Ovary (tissue), 10 donors: ENCODE measurements at regions of chr6 and their contacts with region 1.

Region 1: DNA sequence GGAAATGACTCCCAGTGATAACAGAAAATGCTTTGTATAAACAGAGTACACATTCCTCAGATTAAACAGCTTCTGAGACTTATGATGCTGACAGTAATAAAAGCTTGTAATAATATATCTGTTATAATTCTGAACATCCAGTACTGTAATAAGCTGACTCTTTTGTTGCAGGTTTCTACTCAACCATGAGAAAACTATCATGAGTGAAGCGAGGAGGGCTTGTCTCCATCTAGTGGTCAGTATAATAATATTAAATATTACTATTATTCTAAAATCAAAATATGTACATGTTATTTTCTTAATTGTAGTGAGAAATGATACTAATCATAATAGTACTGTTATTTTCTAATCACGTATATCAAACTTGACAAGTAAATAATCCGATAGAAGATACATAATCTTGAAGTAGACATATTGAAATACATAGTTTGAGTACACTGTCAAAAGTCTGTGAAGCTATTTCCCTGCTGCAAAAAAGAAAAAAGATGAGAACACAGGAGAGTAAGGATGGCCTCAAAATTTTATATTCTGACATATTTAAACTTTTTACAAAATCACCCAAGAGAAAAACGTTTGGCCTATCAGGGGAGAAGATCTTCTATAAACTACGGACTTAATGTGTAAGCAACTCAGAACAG is 183.1 kb downstream of the MOXD1 start:
- DNase-seq: no peak
- H3K4me3 ChIP-seq: no peak overlapping the region
- H3K27ac ChIP-seq: no peak overlapping the region
- H3K4me1 ChIP-seq: no peaks in the 10 kb centered on the region
- H3K27me3 ChIP-seq: no peaks in the 10 kb centered on the region
- CTCF ChIP-seq: peak; percentile 29 to 51 (median 48)
- EP300 ChIP-seq: no peak
- POLR2A ChIP-seq: no peak

Region 2: DNA sequence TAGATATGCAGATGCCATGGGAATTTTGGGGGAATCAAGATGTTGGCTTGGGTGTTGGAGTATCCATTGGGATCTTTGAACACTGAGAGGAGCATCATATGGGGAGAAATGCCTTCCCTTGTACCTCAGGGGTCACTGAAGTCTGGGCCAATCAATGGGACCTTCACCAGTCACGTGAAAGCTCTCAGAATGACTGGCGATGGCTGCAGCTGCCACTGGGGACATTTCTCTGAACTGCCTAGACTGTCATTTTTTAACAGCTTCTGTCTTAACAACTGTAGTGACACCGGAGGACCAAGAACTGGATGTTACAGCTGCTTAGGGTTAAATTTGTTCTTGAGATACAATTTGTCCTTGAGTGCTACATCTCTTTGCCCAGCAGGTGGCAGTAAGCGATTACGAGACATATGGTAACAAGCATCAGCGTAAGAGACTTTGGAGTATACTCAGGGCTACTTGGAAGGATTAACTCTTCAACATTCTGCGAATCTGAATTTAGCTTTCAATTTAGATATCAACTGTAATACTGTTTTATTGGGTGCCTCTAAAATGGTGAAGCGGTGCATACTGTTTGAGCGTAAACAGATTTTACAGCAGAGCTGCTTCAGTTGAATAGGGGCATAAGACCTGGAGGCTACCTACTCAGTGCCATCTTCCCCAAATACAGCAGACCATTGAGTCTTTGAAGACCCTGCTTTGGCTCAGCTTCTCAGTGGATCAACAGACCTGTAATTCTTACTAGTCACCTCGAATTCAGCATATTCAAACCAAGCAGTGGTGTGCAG is 303.0 kb before region 1 on chr6:
- intact Hi-C with region 1: loop called in 1 of 4 experiments (anchors 5 kb)
- DNase-seq: peak; percentile 40 to 71 (median 49)
- H3K4me3 ChIP-seq: no peak overlapping the region
- H3K27ac ChIP-seq: no peak overlapping the region
- H3K4me1 ChIP-seq: no peaks in the 10 kb centered on the region
- H3K27me3 ChIP-seq: no peaks in the 10 kb centered on the region
- CTCF ChIP-seq: peak; percentile 49 to 72 (median 58)
- EP300 ChIP-seq: no peak
- POLR2A ChIP-seq: no peak

Region 3: GRCh38 chr6:131924881-131925474 is 293.2 kb before region 1 on chr6:
- intact Hi-C with region 1: loop called in 2 of 4 experiments (anchors 5 kb)
- DNase-seq: no peak
- H3K4me3 ChIP-seq: no peak overlapping the region
- H3K27ac ChIP-seq: no peak overlapping the region
- H3K4me1 ChIP-seq: no peaks in the 10 kb centered on the region
- H3K27me3 ChIP-seq: no peaks in the 10 kb centered on the region
- CTCF ChIP-seq: peak; percentile 11 to 43 (median 22)
- EP300 ChIP-seq: no peak
- POLR2A ChIP-seq: no peak

Region 4: DNA sequence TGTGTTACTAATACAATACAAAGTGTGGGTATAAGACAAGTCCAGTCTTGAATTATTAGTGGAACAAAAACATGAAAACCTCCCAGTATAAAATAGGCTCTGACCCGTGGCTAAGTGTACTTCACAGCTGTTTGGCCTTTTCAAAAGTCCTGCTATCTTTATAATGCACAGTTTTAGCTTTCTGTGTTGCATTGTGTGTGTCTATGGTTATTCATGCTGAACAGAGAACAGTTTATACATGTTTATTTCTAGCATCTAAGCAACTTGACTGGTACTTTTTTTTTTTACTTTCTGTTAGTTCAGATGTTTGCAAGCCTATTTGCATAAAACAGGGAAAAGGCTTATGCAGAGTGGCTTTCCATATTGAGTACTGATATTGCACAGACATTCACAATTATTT is 147.8 kb before region 1 on chr6:
- intact Hi-C with region 1: no loop called
- DNase-seq: no peak
- H3K4me3 ChIP-seq: no peak overlapping the region
- H3K27ac ChIP-seq: no peak overlapping the region
- H3K4me1 ChIP-seq: no peaks in the 10 kb centered on the region
- H3K27me3 ChIP-seq: no peaks in the 10 kb centered on the region
- CTCF ChIP-seq: no peak
- EP300 ChIP-seq: no peak
- POLR2A ChIP-seq: no peak

Region 5: DNA sequence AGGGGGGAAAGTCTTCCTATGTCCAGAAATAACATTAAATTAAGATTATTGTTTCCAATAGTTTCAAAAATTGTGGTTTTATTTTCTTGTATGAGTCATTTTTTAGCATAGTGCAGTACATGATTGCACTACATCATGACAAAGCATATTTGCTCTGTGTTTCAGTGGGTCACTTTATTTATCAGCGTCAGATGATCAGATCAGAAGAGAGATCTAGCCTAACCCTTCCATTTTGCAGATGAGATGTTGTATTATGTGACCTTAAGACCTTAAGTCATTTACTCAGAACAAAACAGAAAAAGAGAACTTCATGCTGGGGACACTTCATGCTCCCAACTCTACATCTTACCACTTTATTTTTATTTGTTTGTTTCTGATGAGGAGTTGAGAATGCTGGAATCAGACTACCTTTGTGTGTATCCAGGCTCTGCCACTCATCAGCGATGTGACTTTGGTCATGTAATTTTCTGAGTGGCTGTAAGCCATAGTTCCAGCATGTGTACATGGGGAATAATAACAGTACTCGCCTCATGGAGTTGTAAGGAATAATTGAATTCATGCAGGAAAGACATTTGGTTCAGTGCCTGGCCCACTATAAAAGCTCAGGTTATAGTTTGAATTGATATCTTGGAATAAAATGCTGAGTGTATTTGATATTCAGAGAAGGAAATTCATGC is 1036.5 kb after region 1 on chr6:
- intact Hi-C with region 1: no loop called
- DNase-seq: no peak
- H3K4me3 ChIP-seq: no peak overlapping the region
- H3K27ac ChIP-seq: no peak overlapping the region
- H3K4me1 ChIP-seq: no peaks in the 10 kb centered on the region
- H3K27me3 ChIP-seq: no peaks in the 10 kb centered on the region
- CTCF ChIP-seq: no peak
- EP300 ChIP-seq: no peak
- POLR2A ChIP-seq: no peak